Esophagus squamous epithelium (tissue), 5 donors: ENCODE measurements at regions of chr18 and their contacts with region 1.

Region 1: GRCh38 chr18:49561289-49562193 is at the start of gene LIPG:
- DNase-seq: no peak
- H3K4me3 ChIP-seq: peak within 1 kb of the TSS; percentile 8 to 61 (median 36)
- H3K27ac ChIP-seq: peak within 1 kb of the TSS in 1 of 4 donors; percentile 29
- H3K4me1 ChIP-seq: peaks cover 23 to 36% (median 25%) of the 10 kb centered on the region in 3 donors
- H3K27me3 ChIP-seq: peaks cover 10 to 81% (median 12%) of the 10 kb centered on the region in 4 donors
- CTCF ChIP-seq: no peak
- POLR2A ChIP-seq: peak in 1 of 4 donors; percentile 11
- total RNA-seq, gene LIPG: 0.12 to 13.9 (median 2.1) TPM

Region 2: GRCh38 chr18:49768051-49768391 is 206.5 kb after region 1 on chr18:
- intact Hi-C with region 1: loop called (anchors 10 kb)
- DNase-seq: no peak
- H3K4me3 ChIP-seq: no peak overlapping the region
- H3K27ac ChIP-seq: no peak overlapping the region
- H3K4me1 ChIP-seq: no peaks in the 10 kb centered on the region
- H3K27me3 ChIP-seq: no peaks in the 10 kb centered on the region
- CTCF ChIP-seq: peak in 5 of 6 experiments; percentile 23 to 57 (median 29)
- POLR2A ChIP-seq: no peak

Region 3: DNA sequence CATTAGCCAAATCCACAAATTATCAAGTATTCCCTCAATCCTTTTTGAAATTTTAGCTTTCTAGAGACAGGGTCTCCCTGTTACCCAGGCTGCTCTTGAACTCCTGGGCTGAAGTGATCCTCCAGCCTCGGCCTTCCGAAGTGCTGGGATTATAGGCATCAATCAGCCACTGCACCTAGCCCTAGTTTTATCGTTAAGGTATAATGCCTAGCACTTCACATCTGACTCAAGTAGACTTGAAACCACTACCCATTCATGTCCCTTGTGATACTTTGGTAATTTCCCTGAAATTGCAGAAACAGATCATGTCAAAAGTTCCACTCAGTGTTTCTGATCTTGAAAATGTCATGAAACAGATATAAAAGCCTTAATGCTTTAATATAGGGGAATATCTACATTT is 1609.7 kb after region 1 on chr18:
- intact Hi-C with region 1: no loop called
- DNase-seq: no peak
- H3K4me3 ChIP-seq: no peak overlapping the region
- H3K27ac ChIP-seq: no peak overlapping the region
- H3K4me1 ChIP-seq: no peaks in the 10 kb centered on the region
- H3K27me3 ChIP-seq: no peaks in the 10 kb centered on the region
- CTCF ChIP-seq: no peak
- POLR2A ChIP-seq: no peak